Prostate gland (tissue), 2 donors: ENCODE measurements at regions of chr2 and their contacts with region 1.

Region 1: GRCh38 chr2:75640621-75641121 is 5.9 kb upstream of the MRPL19 start:
- DNase-seq: peak; percentile 28
- H3K4me3 ChIP-seq: no peak overlapping the region
- H3K27ac ChIP-seq: no peak overlapping the region
- H3K4me1 ChIP-seq: peaks cover 5% of the 10 kb centered on the region
- H3K27me3 ChIP-seq: no peaks in the 10 kb centered on the region
- CTCF ChIP-seq: peak; percentile 68 to 86 (median 79)
- POLR2A ChIP-seq: no peak

Region 2: DNA sequence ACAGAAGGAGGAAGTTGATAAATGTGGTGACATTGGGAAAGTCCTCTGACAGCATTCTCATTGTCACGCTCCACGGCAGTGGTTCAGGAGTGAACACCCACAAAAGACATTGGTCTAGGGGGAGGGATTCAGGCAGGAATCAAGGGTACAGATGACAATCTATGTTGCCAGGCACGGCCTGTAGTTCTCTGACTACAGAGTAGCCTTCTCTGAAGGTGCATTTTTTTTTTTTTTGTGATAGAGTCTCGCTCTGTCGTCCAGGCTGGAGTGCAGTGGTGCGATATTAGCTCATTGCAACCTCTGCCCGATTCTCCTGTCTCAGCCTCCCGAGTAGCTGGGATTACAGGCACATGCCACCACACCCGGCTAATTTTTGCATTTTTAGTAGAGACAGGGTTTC is 1454.6 kb before region 1 on chr2:
- intact Hi-C with region 1: no loop called
- DNase-seq: no peak
- H3K4me3 ChIP-seq: no peak overlapping the region
- H3K27ac ChIP-seq: no peak overlapping the region
- H3K4me1 ChIP-seq: no peaks in the 10 kb centered on the region
- H3K27me3 ChIP-seq: no peaks in the 10 kb centered on the region
- CTCF ChIP-seq: no peak
- POLR2A ChIP-seq: no peak

Region 3: GRCh38 chr2:75560768-75561565 is 79.7 kb before region 1 on chr2 and contains the start of gene EVA1A:
- intact Hi-C with region 1: no loop called
- DNase-seq: peak; percentile 11
- H3K4me3 ChIP-seq: peak within 1 kb of the TSS; percentile 27 to 46
- H3K27ac ChIP-seq: peak within 1 kb of the TSS; percentile 5 to 37
- H3K4me1 ChIP-seq: no peaks in the 10 kb centered on the region
- H3K27me3 ChIP-seq: no peaks in the 10 kb centered on the region
- CTCF ChIP-seq: no peak
- POLR2A ChIP-seq: peak; percentile 15
- total RNA-seq, gene EVA1A: 9.7 to 16.9 TPM

Region 4: DNA sequence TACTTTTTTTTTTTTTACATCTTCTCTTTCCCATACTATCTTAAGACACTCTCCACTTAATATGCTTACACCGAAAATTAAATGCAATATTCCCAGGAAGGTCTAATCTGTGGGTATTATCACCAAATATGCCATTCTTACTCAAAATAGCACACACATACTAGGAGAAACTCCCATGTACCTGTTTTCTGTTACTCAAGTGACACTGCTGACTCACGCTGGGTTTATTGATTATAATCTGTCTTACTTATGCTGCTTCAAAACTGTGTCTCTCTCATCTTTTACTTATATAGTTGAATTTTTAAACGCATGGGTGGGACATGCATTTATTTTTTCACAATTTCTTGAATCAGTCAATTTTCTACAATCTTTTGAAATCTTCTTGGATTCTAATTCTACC is 35.8 kb after region 1 on chr2:
- intact Hi-C with region 1: loop called (anchors 5 kb)
- DNase-seq: no peak
- H3K4me3 ChIP-seq: no peak overlapping the region
- H3K27ac ChIP-seq: no peak overlapping the region
- H3K4me1 ChIP-seq: no peaks in the 10 kb centered on the region
- H3K27me3 ChIP-seq: no peaks in the 10 kb centered on the region
- CTCF ChIP-seq: no peak
- POLR2A ChIP-seq: no peak